IMR-90 (cell line): ENCODE measurements at regions of chrX and their contacts with region 1.

Region 1: GRCh38 chrX:131394384-131394783 is 105.3 kb upstream of the IGSF1 start:
- DNase-seq: no peak
- ATAC-seq: no peak
- H3K4me3 ChIP-seq: no peak overlapping the region
- H3K27ac ChIP-seq: no peak overlapping the region
- H3K4me1 ChIP-seq: no peaks in the 10 kb centered on the region
- H3K27me3 ChIP-seq: no peaks in the 10 kb centered on the region; the same call in 1 of the 2 replicates
- CTCF ChIP-seq: no peak
- POLR2A ChIP-seq: no peak
- RAD21 ChIP-seq: no peak

Region 2: GRCh38 chrX:131170148-131170547 is 224.2 kb before region 1 on chrX:
- CTCF ChIA-PET with region 1: no interaction called
- POLR2A ChIA-PET with region 1: no interaction called
- dilution Hi-C with region 1: no loop called
- in situ Hi-C with region 1: no loop called
- intact Hi-C with region 1: no loop called
- DNase-seq: no peak
- ATAC-seq: no peak
- H3K4me3 ChIP-seq: no peak overlapping the region
- H3K27ac ChIP-seq: no peak overlapping the region
- H3K4me1 ChIP-seq: no peaks in the 10 kb centered on the region
- H3K27me3 ChIP-seq: no peaks in the 10 kb centered on the region
- CTCF ChIP-seq: no peak
- POLR2A ChIP-seq: no peak
- RAD21 ChIP-seq: no peak

Region 3: GRCh38 chrX:131405497-131405896 is 11.1 kb after region 1 on chrX:
- CTCF ChIA-PET with region 1: interaction called, 12 read pairs
- POLR2A ChIA-PET with region 1: no interaction called
- dilution Hi-C with region 1: no loop called
- in situ Hi-C with region 1: no loop called
- intact Hi-C with region 1: no loop called
- DNase-seq: no peak
- ATAC-seq: no peak
- H3K4me3 ChIP-seq: no peak overlapping the region
- H3K27ac ChIP-seq: no peak overlapping the region
- H3K4me1 ChIP-seq: no peaks in the 10 kb centered on the region
- H3K27me3 ChIP-seq: no peaks in the 10 kb centered on the region
- CTCF ChIP-seq: no peak
- POLR2A ChIP-seq: no peak
- RAD21 ChIP-seq: no peak